Activated CD4-positive, alpha-beta T cell treated with anti-CD3 and anti-CD28 coated beads for 36 hours (primary cell): ENCODE measurements at regions of chr3 and their contacts with region 1.

Region 1: DNA sequence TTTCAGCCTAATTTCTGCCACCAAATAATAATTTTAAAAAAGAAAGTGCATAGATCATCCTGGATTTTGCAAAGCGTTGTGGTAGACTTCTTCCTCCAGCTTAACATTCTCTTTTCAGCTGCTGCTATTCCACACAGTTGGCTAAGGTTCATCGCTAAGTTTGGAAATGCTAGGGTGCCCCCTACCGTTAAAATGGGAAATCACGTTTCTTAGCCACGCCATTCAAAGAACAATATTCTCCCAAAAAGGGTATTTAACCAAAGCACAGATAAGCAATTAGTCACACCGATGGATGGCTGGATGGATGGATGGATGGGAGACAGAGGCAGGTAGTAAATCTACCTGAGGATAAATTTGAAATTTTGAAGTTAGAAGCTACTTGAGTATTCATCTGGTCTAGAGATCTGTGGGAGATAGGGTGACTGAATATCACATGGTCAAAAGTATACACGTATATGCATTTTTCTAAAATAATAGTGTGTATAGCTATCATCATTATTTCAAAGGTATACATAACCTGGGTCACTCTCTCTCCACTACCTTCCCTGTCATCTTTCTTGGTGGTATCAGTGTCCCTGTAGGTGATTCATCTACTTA is 67.2 kb downstream of the EFHB start:
- DNase-seq: peak; percentile 54
- ATAC-seq: peak; percentile 68
- H3K4me3 Mint-ChIP-seq: no peak overlapping the region
- H3K27ac Mint-ChIP-seq: no peak overlapping the region
- H3K4me1 Mint-ChIP-seq: peaks cover 3% of the 10 kb centered on the region
- H3K27me3 Mint-ChIP-seq: peaks cover 11% of the 10 kb centered on the region

Region 2: DNA sequence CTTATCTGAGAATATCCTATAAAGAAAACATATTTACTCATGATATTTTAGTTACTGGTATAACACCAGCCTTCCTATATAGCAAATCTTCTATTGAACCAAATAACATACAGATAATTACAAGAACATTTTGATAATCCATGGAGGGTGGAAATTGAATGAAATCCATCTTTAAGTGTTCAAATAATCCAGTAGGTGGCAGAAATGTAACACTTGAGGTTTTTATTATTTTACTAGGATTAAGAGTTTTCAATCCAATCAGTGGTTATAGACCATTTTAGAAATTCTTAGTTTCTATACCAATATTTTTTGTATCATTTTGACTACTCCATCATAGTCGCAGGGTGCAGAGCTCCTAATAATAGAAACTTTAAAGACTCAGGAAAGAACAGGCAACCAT is 820.4 kb before region 1 on chr3:
- CTCF ChIA-PET with region 1: no interaction called
- POLR2A ChIA-PET with region 1: no interaction called
- intact Hi-C with region 1: loop called in 1 of 2 experiments (anchors 1 kb)
- DNase-seq: no peak
- ATAC-seq: no peak
- H3K4me3 Mint-ChIP-seq: no peak overlapping the region
- H3K27ac Mint-ChIP-seq: no peak overlapping the region
- H3K4me1 Mint-ChIP-seq: no peaks in the 10 kb centered on the region
- H3K27me3 Mint-ChIP-seq: no peaks in the 10 kb centered on the region

Region 3: GRCh38 chr3:19065027-19065426 is 801.8 kb before region 1 on chr3:
- CTCF ChIA-PET with region 1: interaction called, 6 read pairs
- POLR2A ChIA-PET with region 1: no interaction called
- intact Hi-C with region 1: loop called (anchors 5 to 10 kb)
- DNase-seq: peak; percentile 9
- ATAC-seq: no peak
- H3K4me3 Mint-ChIP-seq: no peak overlapping the region
- H3K27ac Mint-ChIP-seq: no peak overlapping the region
- H3K4me1 Mint-ChIP-seq: no peaks in the 10 kb centered on the region
- H3K27me3 Mint-ChIP-seq: no peaks in the 10 kb centered on the region

Region 4: DNA sequence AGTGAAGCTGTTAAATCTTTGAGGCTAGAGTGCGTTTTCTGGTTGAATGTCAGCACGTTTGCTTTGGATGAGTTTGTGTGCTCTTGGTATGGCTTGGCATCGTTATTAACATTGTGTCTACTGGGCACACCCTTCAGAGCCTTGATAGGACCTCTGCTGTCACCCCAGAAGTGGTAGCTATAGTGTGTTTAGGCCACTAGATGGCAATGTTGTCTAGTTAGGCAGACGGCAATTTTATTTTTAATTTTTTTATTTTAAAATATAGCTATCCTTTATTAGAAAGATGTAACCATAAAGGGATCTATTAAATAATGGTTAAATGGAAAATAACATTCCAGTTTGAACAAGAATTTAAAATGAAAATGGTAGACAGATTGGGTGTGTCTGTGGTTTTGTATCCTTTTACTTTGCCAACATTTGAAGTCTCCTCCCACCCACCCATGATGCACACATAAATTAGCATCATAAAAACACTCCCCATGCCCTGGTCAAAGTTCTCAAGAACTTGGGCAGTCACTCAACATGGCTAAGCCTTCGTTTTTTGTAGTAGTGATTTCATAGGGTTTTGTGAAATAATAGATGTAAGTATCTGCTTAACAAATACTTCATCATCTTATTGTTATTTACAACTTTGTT is 517.8 kb before region 1 on chr3:
- CTCF ChIA-PET with region 1: interaction called, 28 read pairs
- POLR2A ChIA-PET with region 1: no interaction called
- intact Hi-C with region 1: loop called (anchors 1 kb)
- DNase-seq: peak; percentile 22
- ATAC-seq: peak; percentile 73
- H3K4me3 Mint-ChIP-seq: no peak overlapping the region
- H3K27ac Mint-ChIP-seq: no peak overlapping the region
- H3K4me1 Mint-ChIP-seq: no peaks in the 10 kb centered on the region
- H3K27me3 Mint-ChIP-seq: peaks cover 2% of the 10 kb centered on the region

Region 5: GRCh38 chr3:19543212-19543841 is 323.5 kb before region 1 on chr3:
- CTCF ChIA-PET with region 1: no interaction called
- POLR2A ChIA-PET with region 1: no interaction called
- intact Hi-C with region 1: loop called in 1 of 2 experiments (anchors 10 kb)
- DNase-seq: no peak
- ATAC-seq: no peak
- H3K4me3 Mint-ChIP-seq: no peak overlapping the region
- H3K27ac Mint-ChIP-seq: no peak overlapping the region
- H3K4me1 Mint-ChIP-seq: no peaks in the 10 kb centered on the region
- H3K27me3 Mint-ChIP-seq: peaks cover 3% of the 10 kb centered on the region